HEK293 (cell line): ENCODE measurements at regions of chr1 and their contacts with region 1.

Region 1: DNA sequence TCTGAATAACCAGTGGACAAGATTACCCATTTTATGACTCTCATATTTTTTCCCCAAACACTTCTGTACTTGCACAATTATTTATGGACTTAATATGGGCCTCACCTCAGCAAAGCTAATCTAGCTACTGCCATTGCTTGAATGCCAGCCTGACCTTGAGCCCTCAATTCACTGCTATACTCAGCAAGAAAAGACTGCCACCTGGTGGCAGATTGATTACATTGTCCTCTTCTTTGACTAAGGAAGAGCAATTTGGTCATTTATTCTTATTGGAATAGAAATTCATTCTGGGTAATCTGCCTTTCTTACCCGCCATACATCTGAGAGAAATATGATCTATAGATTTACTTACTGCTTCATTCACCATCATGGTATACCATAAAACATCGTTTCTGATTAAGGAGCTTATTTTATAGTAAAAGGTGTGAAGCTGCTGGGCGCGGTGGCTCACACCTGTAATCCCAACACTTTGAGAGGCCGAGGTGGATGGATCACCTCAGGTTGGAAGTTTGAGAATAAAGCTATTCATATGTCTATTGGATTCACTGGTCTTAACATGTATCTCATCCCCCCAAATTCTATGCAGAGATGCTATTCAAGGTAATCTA is 32.9 kb upstream of the DIPK1A start:
- H3K4me3 ChIP-seq: no peak overlapping the region
- H3K27ac ChIP-seq: no peak overlapping the region
- H3K4me1 ChIP-seq: no peaks in the 10 kb centered on the region
- CTCF ChIP-seq: 0 out of 2 replicates have a peak, but pooled peaks have one; percentile 53

Region 2: DNA sequence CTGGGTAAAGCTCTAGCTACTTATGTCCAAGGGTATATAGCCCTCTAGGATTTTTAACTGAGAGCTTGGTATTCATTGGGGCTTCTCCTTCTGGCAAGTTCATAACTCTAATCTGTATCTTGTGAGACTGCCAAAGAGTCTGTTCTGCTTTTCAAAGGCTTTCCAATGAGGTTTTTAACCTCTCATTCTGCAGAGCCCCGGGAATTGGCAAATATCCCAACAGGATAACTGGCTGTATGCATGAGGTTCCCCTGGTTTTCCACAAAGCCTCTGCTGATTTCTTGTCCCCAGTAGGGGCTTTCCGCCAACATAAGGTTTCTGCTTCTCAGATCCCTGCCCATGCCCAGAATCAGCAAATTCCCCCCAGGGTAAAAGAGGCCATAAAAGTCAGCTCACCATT is 121.5 kb before region 1 on chr1:
- CTCF ChIA-PET with region 1: interaction called, 24 read pairs
- POLR2A ChIA-PET with region 1: no interaction called
- H3K4me3 ChIP-seq: no peak overlapping the region
- H3K27ac ChIP-seq: no peak overlapping the region
- H3K4me1 ChIP-seq: 0 out of 2 replicates have a peak, but pooled peaks cover 4% of the 10 kb centered on the region
- CTCF ChIP-seq: no peak

Region 3: DNA sequence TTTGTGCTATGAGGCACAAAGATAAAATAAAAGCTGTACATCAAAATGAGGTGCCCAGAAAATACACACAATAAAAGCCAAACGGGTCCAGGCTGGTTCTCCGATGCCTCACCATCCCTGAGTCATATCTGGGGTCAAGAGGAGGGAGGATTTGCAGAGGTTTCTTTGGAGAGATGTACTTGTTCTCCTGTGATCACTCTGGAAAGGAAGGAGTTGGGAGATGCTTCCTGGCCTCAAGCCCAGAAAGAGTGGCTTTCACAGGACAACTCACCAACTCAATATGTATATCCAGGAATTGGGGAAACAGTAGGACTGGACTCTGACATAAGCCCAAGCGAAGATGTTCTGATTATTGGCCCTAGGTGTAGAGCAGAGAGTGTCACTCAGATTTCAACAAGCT is 84.9 kb before region 1 on chr1:
- CTCF ChIA-PET with region 1: interaction called, 17 read pairs
- POLR2A ChIA-PET with region 1: no interaction called
- H3K4me3 ChIP-seq: no peak overlapping the region
- H3K27ac ChIP-seq: no peak overlapping the region
- H3K4me1 ChIP-seq: no peaks in the 10 kb centered on the region; the same call in 1 of the 2 replicates
- CTCF ChIP-seq: no peak

Region 4: GRCh38 chr1:92968138-92969032 is 25.8 kb before region 1 on chr1:
- CTCF ChIA-PET with region 1: interaction called, 34 read pairs
- POLR2A ChIA-PET with region 1: no interaction called
- H3K4me3 ChIP-seq: no peak overlapping the region
- H3K27ac ChIP-seq: no peak overlapping the region
- H3K4me1 ChIP-seq: peaks cover 3% of the 10 kb centered on the region
- CTCF ChIP-seq: no peak

Region 5: DNA sequence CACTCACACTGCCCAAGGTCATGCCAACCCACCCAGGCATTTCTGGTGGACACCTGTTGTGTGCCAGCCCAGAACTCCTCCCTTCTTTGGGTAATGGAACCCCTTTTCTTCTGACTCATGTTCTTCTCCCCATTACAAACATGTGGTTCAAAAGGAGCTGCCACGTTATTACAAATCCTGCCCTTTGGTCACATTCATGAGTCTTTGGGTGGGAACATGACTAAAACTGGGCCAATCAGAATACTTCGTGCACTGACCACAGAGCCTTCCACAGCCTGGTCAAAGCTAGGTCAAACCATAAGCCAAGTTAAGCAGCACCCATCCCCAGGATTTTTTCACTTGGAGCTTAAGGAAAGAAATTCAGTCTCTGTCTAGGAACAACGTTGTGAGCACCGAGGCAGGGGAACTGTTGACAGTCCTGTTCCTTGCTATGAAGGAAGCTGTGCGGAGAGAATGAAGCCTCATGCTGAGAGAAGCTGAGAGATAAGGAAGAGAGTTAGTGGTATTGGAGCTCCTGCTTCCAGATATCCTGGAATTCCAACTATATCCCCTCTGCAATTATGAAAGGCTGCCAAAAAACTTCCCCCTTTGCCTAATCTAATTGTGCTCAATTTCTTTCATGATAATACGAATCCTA is 13.8 kb after region 1 on chr1:
- CTCF ChIA-PET with region 1: interaction called, 43 read pairs
- POLR2A ChIA-PET with region 1: no interaction called
- H3K4me3 ChIP-seq: no peak overlapping the region
- H3K27ac ChIP-seq: no peak overlapping the region
- H3K4me1 ChIP-seq: no peaks in the 10 kb centered on the region
- CTCF ChIP-seq: no peak

Region 6: GRCh38 chr1:93061895-93062792 is 67.9 kb after region 1 on chr1:
- CTCF ChIA-PET with region 1: interaction called, 17 read pairs
- POLR2A ChIA-PET with region 1: no interaction called
- H3K4me3 ChIP-seq: no peak overlapping the region
- H3K27ac ChIP-seq: no peak overlapping the region
- H3K4me1 ChIP-seq: no peaks in the 10 kb centered on the region
- CTCF ChIP-seq: peak; percentile 47; the same call in 1 of the 2 replicates

Region 7: DNA sequence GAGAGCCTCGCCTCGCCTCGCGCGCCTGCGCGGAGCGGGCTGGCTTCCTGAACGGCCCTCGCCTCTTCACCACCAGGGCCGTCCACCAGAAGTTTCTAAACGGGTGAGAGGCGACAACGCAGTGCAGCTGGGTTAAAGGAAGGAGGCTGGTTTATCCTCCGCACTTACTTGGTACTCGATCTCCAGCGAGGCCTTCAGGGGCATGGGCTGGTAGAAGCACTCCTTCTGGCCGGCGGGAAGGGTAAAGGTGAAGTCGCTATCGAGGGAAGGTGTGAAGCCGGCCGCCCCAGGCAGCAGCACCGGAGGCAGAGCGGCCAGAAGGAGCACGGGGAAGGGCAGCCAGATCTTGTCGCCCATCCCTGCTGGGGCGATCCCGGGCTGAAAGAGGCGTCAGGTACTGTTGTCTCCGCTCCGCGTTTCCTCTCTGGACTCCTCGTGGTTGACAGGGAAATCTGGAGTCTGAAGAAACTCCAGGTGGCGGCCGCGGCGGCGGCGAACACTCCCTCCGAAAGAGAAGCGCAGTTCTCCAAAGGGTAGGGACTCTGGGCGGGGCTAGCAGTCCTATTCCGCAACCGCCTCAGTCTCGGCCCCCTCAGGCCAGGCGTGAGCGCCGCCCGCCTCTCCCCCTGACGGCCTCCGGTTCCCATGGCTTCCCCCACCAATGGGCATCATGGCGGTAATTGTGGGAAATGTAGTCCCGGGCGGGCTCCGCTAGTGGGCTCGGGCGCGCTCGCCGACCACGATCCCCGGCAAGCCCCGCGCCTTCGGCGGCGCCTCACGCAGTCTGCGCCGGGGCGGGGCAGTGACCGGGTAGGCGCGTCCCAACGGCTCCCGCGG is 185.9 kb after region 1 on chr1 and contains the start of gene TMED5:
- CTCF ChIA-PET with region 1: no interaction called
- POLR2A ChIA-PET with region 1: no interaction called
- H3K4me3 ChIP-seq: peak within 1 kb of the TSS; percentile 98
- H3K27ac ChIP-seq: peak within 1 kb of the TSS; percentile 94
- H3K4me1 ChIP-seq: no peaks in the 10 kb centered on the region
- CTCF ChIP-seq: peak; percentile 79; the same call in 1 of the 2 replicates